B cell (primary cell): ENCODE measurements at regions of chr14 and their contacts with region 1.

Region 1: DNA sequence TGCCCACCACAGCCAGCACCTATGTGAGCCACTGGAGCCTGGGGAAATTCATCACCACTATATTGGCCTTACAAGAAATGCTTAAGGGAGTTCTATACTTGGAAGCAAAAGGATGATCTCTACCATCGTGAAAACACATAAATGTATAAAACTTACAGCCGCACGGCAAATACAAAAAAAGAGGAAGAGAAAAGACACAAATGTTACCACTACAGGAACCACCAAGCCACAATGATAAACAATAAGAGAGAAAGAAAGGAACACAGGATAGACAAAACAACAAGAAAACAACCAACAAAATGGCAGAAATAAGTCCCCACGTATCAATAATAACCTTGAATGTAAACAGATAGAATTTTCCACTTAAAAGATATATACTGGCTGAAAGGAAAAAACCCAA is 267.5 kb downstream of the TMEM121 start:
- DNase-seq: no peak
- ATAC-seq: no peak
- H3K4me3 ChIP-seq: no peak overlapping the region
- H3K4me3 Mint-ChIP-seq: peak overlapping the region; percentile 54
- H3K27ac ChIP-seq: peak overlapping the region in 1 of 2 donors; percentile 12
- H3K27ac Mint-ChIP-seq: peak overlapping the region; percentile 38
- H3K4me1 ChIP-seq: peaks cover 12 to 19% of the 10 kb centered on the region in 2 donors
- H3K4me1 Mint-ChIP-seq: peaks cover 16% of the 10 kb centered on the region
- H3K27me3 ChIP-seq: no peaks in the 10 kb centered on the region
- H3K27me3 Mint-ChIP-seq: no peaks in the 10 kb centered on the region
- CTCF ChIP-seq: no peak

Region 2: GRCh38 chr14:105841022-105842009 is 47.5 kb after region 1 on chr14:
- CTCF ChIA-PET with region 1: no interaction called
- POLR2A ChIA-PET with region 1: no interaction called
- intact Hi-C with region 1: loop called (anchors 10 kb)
- DNase-seq: no peak
- ATAC-seq: no peak
- H3K4me3 ChIP-seq: no peak overlapping the region
- H3K4me3 Mint-ChIP-seq: no peak overlapping the region
- H3K27ac ChIP-seq: peak overlapping the region in 1 of 2 donors; percentile 55
- H3K27ac Mint-ChIP-seq: peak overlapping the region; percentile 81
- H3K4me1 ChIP-seq: peaks cover 0 to 8% of the 10 kb centered on the region in 2 donors
- H3K4me1 Mint-ChIP-seq: peaks cover 17% of the 10 kb centered on the region
- H3K27me3 ChIP-seq: no peaks in the 10 kb centered on the region
- H3K27me3 Mint-ChIP-seq: no peaks in the 10 kb centered on the region
- CTCF ChIP-seq: no peak

Region 3: DNA sequence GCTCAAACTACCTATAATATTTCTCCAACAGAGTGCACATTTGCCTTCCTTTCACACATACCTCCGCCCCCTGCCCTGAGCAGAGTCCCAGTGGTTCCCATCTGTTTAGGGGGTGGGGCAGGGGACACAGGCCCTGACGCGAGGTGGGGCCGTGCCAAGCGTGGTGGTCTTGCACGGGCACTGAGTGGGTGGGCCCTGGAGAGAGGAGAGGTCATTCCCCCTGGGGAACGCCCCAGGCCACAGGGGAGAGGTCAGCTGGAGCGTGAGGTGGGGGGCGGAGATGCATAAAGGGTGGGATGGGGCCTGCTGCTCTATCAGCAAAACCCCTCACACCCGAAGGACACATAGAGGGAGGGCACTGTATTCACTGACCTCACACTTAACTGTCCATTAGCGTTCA is 174.5 kb after region 1 on chr14:
- CTCF ChIA-PET with region 1: no interaction called
- POLR2A ChIA-PET with region 1: no interaction called
- intact Hi-C with region 1: no loop called
- DNase-seq: no peak
- ATAC-seq: no peak
- H3K4me3 ChIP-seq: no peak overlapping the region
- H3K4me3 Mint-ChIP-seq: no peak overlapping the region
- H3K27ac ChIP-seq: no peak overlapping the region
- H3K27ac Mint-ChIP-seq: peak overlapping the region; percentile 6
- H3K4me1 ChIP-seq: peaks cover 11 to 23% of the 10 kb centered on the region in 2 donors
- H3K4me1 Mint-ChIP-seq: peaks cover 27% of the 10 kb centered on the region
- H3K27me3 ChIP-seq: no peaks in the 10 kb centered on the region
- H3K27me3 Mint-ChIP-seq: no peaks in the 10 kb centered on the region
- CTCF ChIP-seq: no peak